ENCODE measurements at regions of chr17 and their contacts with region 1.

Region 1: GRCh38 chr17:7856883-7857723 is at the start of gene NAA38:
- DNase-seq: peak; percentile 99
- ATAC-seq: peak; percentile 82
- H3K4me3 ChIP-seq: peak within 1 kb of the TSS; percentile 57 to 92 (median 85)
- H3K4me3 Mint-ChIP-seq: no peak within 1 kb of the TSS
- H3K27ac ChIP-seq: peak within 1 kb of the TSS; percentile 85 to 90
- H3K27ac Mint-ChIP-seq: no peak within 1 kb of the TSS
- H3K4me1 ChIP-seq: peaks cover 20 to 32% of the 10 kb centered on the region in 2 donors
- H3K4me1 Mint-ChIP-seq: peaks cover 5% of the 10 kb centered on the region
- H3K27me3 ChIP-seq: no peaks in the 10 kb centered on the region
- H3K27me3 Mint-ChIP-seq: no peaks in the 10 kb centered on the region
- CTCF ChIP-seq: no peak
- total RNA-seq, gene NAA38: 20.0 and 22.0 TPM in 2 replicates

Region 2: DNA sequence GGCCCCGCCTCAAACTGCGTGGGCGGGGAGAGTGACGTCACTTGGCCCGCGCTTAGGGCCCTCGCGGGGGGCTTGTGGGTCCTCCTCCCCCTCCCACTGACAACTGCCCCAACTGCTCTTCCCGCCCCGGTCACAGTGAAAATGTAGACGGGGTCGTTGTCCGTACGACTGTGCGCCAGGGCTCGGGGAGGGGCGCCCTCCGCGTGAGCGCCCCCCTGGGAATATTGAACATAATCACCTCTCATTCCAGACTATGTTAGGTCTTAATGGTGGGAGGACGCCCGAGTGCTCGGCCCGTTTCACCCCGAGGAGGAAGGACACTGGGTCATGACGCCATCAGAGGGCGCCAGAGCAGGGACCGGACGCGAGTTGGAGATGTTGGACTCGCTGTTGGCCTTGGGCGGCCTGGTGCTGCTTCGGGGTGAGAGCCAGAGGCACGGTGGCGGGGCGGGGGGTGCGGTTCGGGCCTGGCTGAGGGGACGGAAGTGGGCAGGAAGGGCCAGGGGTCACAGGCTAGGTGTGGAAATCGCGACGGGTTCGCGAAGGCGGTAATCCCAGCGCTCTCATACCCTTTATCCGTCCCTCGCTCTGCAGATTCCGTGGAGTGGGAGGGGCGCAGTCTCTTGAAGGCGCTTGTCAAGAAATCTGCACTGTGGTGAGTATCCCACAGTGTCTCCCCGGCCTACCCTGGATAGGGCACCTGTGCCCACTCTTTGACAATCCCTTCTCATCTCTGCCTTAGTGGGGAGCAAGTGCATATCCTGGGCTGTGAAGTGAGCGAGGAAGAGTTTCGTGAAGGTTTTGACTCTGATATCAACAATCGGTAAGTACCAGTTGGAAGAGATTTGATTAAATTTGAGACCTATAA is 604.7 kb before region 1 on chr17 and contains the start of gene ELP5:
- CTCF ChIA-PET with region 1: no interaction called
- POLR2A ChIA-PET with region 1: no interaction called
- intact Hi-C with region 1: loop called (anchors 5 kb)
- DNase-seq: peak; percentile 100
- ATAC-seq: peak; percentile 64
- H3K4me3 ChIP-seq: peak within 1 kb of the TSS; percentile 69 to 90 (median 78)
- H3K4me3 Mint-ChIP-seq: peak within 1 kb of the TSS; percentile 98
- H3K27ac ChIP-seq: peak within 1 kb of the TSS; percentile 98 to 100
- H3K27ac Mint-ChIP-seq: peak within 1 kb of the TSS; percentile 100
- H3K4me1 ChIP-seq: peaks cover 30 to 33% of the 10 kb centered on the region in 2 donors
- H3K4me1 Mint-ChIP-seq: peaks cover 44% of the 10 kb centered on the region
- H3K27me3 ChIP-seq: no peaks in the 10 kb centered on the region
- H3K27me3 Mint-ChIP-seq: no peaks in the 10 kb centered on the region
- CTCF ChIP-seq: no peak
- total RNA-seq, gene ELP5: 42.2 and 48.0 TPM in 2 replicates

Region 3: DNA sequence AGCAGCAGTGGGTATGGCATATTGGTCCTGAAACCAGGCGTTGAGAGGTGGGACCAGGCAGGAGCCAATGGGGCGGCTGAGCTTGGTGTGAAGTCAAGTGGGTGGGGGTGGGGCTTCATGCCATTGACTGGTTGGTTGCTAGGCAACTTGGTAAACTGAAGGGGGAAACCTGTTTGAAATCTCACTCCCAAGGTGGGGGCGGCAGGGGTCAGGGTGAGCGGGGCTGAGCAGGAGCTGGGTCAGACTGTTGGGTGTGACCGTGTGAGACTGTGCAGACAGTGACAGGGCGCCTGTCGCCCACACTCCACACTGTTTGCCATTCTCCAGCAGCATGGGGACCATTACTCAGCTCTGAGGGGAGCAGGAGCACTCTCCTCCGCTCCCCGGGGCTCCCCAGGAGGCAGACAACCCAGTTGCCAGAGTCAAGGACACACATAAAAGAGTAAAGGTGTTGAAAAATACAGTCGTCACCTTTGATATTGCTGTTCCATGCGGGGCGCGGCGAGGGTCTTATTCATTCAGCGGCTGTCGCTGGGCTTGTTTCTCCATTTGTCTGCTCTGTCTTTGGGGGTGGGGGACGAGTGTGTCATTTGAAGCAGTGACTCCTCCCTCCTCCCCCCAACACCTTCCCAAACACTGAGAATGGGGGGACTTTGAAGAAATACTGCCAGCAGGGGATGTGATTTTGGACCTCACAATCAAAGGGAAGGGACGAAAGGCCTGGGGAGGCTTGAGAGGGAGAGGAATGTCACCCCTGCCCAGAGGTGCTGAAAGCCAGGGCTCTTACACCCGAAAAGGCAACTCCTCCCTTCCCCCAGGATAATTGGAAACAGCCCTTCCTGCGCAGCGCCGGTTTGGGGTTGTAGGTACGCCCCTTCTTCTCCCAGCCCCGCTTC is 153.3 kb before region 1 on chr17:
- CTCF ChIA-PET with region 1: no interaction called
- POLR2A ChIA-PET with region 1: no interaction called
- intact Hi-C with region 1: no loop called
- DNase-seq: peak; percentile 54
- ATAC-seq: peak; percentile 28
- H3K4me3 ChIP-seq: no peak overlapping the region
- H3K4me3 Mint-ChIP-seq: peak overlapping the region; percentile 74
- H3K27ac ChIP-seq: no peak overlapping the region
- H3K27ac Mint-ChIP-seq: no peak overlapping the region
- H3K4me1 ChIP-seq: peaks cover 19 to 23% of the 10 kb centered on the region in 2 donors
- H3K4me1 Mint-ChIP-seq: peaks cover 15% of the 10 kb centered on the region
- H3K27me3 ChIP-seq: peaks cover 0 to 61% (median 19%) of the 10 kb centered on the region in 4 experiments
- H3K27me3 Mint-ChIP-seq: peaks cover 48% of the 10 kb centered on the region
- CTCF ChIP-seq: no peak

Region 4: DNA sequence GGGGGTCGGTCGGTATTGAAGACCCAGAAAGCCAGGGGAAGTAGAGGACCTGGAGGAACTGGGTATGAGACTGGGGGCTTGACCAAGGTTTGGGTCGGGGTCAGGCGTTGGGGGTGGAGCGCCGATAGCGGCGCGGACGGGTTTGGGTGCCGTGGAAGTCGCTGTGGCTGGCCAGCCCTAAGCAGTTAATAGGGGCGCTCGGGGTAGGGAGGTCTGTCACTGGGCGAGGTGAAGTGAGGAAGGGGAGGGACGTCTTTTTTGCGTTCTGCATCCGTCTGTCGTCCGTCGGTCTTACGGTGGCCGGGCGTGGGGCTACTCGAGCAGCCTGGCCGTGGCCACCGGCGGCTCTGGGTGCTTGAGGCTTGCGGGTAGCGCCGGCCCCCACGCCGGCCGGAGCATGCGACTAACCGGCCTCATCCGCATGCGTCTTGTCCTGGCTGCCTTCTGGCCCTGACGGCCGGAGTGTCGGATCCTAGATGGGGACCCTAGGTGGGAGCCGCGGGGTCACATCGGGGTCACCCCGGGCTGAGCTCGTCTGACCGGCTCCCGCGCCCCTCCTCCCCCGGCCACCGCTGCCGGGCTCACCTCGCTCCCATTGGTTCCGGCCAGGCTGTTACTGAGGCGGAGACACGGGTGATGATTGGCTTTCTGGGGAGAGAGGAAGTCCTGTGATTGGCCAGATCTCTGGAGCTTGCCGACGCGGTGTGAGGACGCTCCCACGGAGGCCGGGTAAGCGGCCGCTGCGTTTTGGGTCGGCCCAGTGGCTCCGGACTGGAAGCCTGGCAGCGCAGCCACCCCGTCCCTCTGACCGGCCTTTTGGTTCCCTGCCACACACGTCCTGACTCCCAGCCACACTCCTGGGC is 12.6 kb before region 1 on chr17:
- CTCF ChIA-PET with region 1: interaction called, 26 read pairs
- POLR2A ChIA-PET with region 1: interaction called, 14 read pairs
- intact Hi-C with region 1: loop called (anchors 1 kb)
- DNase-seq: peak; percentile 93
- ATAC-seq: peak; percentile 41
- H3K4me3 ChIP-seq: peak overlapping the region; percentile 67 to 95 (median 93)
- H3K4me3 Mint-ChIP-seq: peak overlapping the region; percentile 100
- H3K27ac ChIP-seq: peak overlapping the region; percentile 100
- H3K27ac Mint-ChIP-seq: peak overlapping the region; percentile 100
- H3K4me1 ChIP-seq: peaks cover 20 to 49% of the 10 kb centered on the region in 2 donors
- H3K4me1 Mint-ChIP-seq: peaks cover 39% of the 10 kb centered on the region
- H3K27me3 ChIP-seq: no peaks in the 10 kb centered on the region
- H3K27me3 Mint-ChIP-seq: no peaks in the 10 kb centered on the region
- CTCF ChIP-seq: no peak

Region 5: GRCh38 chr17:7915611-7916382 is 58.7 kb after region 1 on chr17 and contains the start of gene RNF227:
- CTCF ChIA-PET with region 1: interaction called, 17 read pairs
- POLR2A ChIA-PET with region 1: interaction called, 5 read pairs
- intact Hi-C with region 1: loop called (anchors 5 kb)
- DNase-seq: peak; percentile 93
- ATAC-seq: peak; percentile 82
- H3K4me3 ChIP-seq: peak within 1 kb of the TSS; percentile 9 to 81 (median 76)
- H3K4me3 Mint-ChIP-seq: peak within 1 kb of the TSS; percentile 93
- H3K27ac ChIP-seq: peak within 1 kb of the TSS; percentile 69 to 75
- H3K27ac Mint-ChIP-seq: peak within 1 kb of the TSS; percentile 93
- H3K4me1 ChIP-seq: peaks cover 16 to 20% of the 10 kb centered on the region in 2 donors
- H3K4me1 Mint-ChIP-seq: peaks cover 24% of the 10 kb centered on the region
- H3K27me3 ChIP-seq: no peaks in the 10 kb centered on the region
- H3K27me3 Mint-ChIP-seq: no peaks in the 10 kb centered on the region
- CTCF ChIP-seq: no peak
- total RNA-seq, gene RNF227: 3.8 and 4.3 TPM in 2 replicates

Region 6: DNA sequence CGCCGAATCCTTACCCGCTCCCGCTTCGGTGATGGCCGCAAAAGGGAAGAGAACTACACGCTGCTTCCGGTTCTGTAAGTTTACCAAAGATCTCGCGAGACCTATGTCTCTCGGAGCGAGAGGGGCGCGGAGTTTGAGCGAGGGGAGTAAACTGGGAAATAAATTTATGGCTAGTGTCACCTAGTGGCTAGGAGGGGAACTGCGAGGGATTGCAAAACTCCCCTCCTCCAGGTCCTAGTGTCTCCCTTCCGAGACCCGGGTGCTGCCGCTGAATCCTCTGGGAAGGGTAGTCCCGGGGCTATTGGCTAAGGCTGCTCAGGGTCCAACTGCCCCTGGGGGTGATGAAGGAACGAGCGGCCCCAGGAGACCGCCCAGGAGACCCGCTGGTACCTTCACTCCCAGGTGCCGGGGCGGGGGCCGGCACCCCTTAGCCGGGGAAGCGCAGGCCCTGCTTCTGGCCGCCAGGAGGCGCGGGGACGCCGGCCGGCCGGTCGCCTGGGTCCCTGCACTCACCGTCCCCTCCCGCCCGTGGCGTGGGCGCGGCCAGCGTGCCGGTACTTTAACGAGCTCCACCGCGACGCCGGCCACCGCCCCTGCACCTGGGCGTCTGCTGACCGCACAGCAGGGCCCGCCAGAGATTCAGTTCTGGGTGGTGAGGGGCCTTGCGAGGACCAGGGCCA is 526.2 kb after region 1 on chr17 and contains the start of gene RPL26:
- CTCF ChIA-PET with region 1: no interaction called
- POLR2A ChIA-PET with region 1: no interaction called
- intact Hi-C with region 1: loop called (anchors 1 kb)
- DNase-seq: peak; percentile 98
- ATAC-seq: peak; percentile 89
- H3K4me3 ChIP-seq: peak within 1 kb of the TSS; percentile 73 to 95 (median 84)
- H3K4me3 Mint-ChIP-seq: peak within 1 kb of the TSS; percentile 89
- H3K27ac ChIP-seq: peak within 1 kb of the TSS; percentile 72 to 82
- H3K27ac Mint-ChIP-seq: peak within 1 kb of the TSS; percentile 87
- H3K4me1 ChIP-seq: peaks cover 25 to 36% of the 10 kb centered on the region in 2 donors
- H3K4me1 Mint-ChIP-seq: peaks cover 50% of the 10 kb centered on the region
- H3K27me3 ChIP-seq: no peaks in the 10 kb centered on the region
- H3K27me3 Mint-ChIP-seq: no peaks in the 10 kb centered on the region
- CTCF ChIP-seq: peak; percentile 100
- total RNA-seq, gene RPL26: 2,601 and 2,684 TPM in 2 replicates